ENCODE measurements at regions of chr14 and their contacts with region 1.

Region 1: GRCh38 chr14:99793213-99794150 is at the start of gene EML1:
- DNase-seq: peak; percentile 80 to 88
- ATAC-seq: peak; percentile 94 to 95
- H3K4me3 ChIP-seq: peak within 1 kb of the TSS; percentile 76
- H3K27ac ChIP-seq: peak within 1 kb of the TSS; percentile 78 to 98
- H3K4me1 ChIP-seq: peaks cover 20% of the 10 kb centered on the region
- CTCF ChIP-seq: peak; percentile 55
- EP300 ChIP-seq: no peak
- POLR2A ChIP-seq: peak; percentile 58
- RAD21 ChIP-seq: no peak
- polyA plus RNA-seq, gene EML1: 30.8 and 37.7 TPM in 2 replicates

Region 2: DNA sequence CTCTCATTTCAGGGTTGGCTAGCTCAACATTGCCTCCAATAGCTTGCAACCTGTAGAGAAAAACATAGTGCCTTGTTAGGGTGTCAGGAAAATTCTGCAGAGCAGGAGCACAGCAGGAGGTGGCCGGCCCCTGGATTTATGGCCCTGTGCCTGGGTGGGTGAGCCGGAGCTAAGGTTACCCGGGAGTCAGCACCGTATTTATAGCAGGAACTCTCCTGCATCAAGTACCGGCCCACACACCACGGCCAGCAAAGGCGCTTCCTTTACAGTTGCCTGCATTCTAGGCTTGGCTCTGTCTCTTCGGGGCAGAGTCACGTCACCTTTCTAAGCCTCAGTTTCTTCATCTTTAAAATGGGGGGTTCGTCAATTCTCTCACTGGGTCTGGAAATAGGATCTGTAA is 53.1 kb before region 1 on chr14:
- CTCF ChIA-PET with region 1: interaction called, 10 read pairs
- POLR2A ChIA-PET with region 1: no interaction called
- DNase-seq: no peak
- ATAC-seq: no peak
- H3K4me3 ChIP-seq: no peak overlapping the region
- H3K27ac ChIP-seq: no peak overlapping the region
- H3K4me1 ChIP-seq: peaks cover 14% of the 10 kb centered on the region
- CTCF ChIP-seq: no peak
- EP300 ChIP-seq: no peak
- POLR2A ChIP-seq: no peak
- RAD21 ChIP-seq: no peak

Region 3: GRCh38 chr14:99755629-99756603 is 37.6 kb before region 1 on chr14:
- CTCF ChIA-PET with region 1: interaction called, 26 read pairs
- POLR2A ChIA-PET with region 1: interaction called, 4 read pairs
- DNase-seq: peak; percentile 73 to 82
- ATAC-seq: peak; percentile 79 to 85
- H3K4me3 ChIP-seq: no peak overlapping the region
- H3K27ac ChIP-seq: peak overlapping the region; percentile 83 to 92
- H3K4me1 ChIP-seq: peaks cover 81% of the 10 kb centered on the region
- CTCF ChIP-seq: no peak
- EP300 ChIP-seq: peak in 1 of 2 experiments; percentile 51; a peak in 2 of 5 replicates
- POLR2A ChIP-seq: no peak
- RAD21 ChIP-seq: no peak

Measured in A549 (cell line).